ENCODE measurements at regions of chr4 and their contacts with region 1.

Region 1: DNA sequence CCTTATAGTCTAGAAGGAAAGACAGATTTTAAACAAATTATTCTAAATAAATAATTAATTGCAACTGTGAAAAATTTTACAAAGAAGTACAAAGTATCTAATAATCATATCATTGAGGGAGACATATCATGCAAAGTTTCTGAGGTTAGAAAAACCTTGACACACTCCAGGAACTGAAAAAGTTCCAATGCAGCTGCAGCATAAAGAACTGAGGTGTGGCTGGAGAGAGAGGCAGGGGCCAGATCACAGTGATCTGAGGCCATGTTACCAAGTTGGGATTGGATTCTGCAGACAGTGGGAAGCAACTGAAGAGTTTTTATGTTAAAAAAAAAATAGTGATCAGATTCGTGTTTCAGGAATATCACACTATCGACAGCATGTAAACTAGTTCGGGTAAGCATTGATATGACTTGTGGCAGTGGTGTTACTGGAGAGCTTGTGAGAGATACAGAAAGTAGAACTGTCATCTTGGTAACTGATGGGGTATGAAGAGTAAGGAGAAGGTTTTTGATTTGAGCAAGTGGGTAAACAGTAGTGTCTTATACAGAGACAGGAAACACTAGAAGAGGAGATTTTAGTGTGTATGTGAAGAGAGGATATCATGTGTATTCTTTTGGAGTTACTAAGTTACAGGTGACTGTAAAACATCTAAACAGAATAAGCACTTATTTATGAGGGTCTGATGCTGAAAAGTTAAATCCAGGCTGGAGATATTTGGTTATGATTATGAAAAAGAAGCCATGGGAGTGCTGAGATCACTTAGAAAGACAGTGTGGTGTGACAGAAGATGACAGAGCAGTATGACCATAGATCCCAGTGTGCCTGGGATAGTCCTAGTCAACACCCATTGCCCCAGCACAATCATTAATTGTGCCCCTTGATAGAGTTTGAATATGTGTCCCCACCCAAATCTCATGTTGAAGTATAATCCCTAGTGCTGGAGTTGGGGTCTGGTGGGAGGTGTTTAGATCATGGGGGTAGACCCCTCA is 15.6 kb upstream of the SPRY1 start:
- DNase-seq: no peak
- ATAC-seq: no peak
- H3K4me3 ChIP-seq: no peak overlapping the region
- H3K27ac ChIP-seq: no peak overlapping the region
- H3K4me1 ChIP-seq: peaks cover 0 to 2% of the 10 kb centered on the region in 2 donors
- H3K27me3 ChIP-seq: no peaks in the 10 kb centered on the region
- CTCF ChIP-seq: no peak
- POLR2A ChIP-seq: no peak

Region 2: DNA sequence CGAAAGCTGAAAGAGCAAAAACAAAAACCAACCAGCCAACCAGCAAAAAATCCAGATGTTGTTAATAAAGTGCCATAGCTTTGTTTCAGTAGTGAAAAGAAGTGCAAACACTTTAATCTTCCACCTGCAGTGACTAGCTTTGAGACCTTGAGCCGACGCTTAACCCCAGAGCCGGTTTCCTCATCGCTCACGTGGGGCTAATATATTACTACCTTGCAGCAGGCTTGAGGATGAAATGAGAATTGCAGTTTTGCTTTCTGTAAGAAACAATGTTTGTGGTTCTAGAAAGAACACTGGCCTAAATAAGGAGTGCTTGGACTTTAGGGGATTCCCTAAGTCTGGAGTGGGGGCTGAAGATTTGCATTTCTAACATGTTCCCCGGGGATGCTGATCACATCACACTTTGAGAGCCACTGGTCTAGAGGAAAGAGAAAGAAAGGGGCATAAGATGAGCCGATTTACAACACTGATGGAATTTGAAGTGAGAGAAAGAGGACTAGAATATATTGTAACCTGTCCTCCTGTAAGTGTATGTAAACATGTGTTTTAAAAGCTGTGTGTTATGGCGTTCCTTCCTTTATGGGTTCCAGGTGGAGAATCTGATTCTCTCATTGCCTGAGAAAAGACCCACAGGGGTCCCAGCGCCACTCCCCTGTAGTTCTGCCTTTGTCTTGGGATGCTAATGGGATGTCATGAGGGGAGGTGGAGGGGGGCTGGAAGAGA is 553.0 kb before region 1 on chr4:
- in situ Hi-C with region 1: no loop called
- intact Hi-C with region 1: no loop called
- DNase-seq: no peak
- ATAC-seq: peak in 1 of 2 donors; percentile 50
- H3K4me3 ChIP-seq: peak overlapping the region; percentile 68 to 78 (median 71)
- H3K27ac ChIP-seq: peak overlapping the region; percentile 61 to 76 (median 72)
- H3K4me1 ChIP-seq: peaks cover 5 to 8% of the 10 kb centered on the region in 2 donors
- H3K27me3 ChIP-seq: peaks cover 22 to 35% (median 31%) of the 10 kb centered on the region in 3 donors
- CTCF ChIP-seq: no peak
- POLR2A ChIP-seq: no peak

Region 3: DNA sequence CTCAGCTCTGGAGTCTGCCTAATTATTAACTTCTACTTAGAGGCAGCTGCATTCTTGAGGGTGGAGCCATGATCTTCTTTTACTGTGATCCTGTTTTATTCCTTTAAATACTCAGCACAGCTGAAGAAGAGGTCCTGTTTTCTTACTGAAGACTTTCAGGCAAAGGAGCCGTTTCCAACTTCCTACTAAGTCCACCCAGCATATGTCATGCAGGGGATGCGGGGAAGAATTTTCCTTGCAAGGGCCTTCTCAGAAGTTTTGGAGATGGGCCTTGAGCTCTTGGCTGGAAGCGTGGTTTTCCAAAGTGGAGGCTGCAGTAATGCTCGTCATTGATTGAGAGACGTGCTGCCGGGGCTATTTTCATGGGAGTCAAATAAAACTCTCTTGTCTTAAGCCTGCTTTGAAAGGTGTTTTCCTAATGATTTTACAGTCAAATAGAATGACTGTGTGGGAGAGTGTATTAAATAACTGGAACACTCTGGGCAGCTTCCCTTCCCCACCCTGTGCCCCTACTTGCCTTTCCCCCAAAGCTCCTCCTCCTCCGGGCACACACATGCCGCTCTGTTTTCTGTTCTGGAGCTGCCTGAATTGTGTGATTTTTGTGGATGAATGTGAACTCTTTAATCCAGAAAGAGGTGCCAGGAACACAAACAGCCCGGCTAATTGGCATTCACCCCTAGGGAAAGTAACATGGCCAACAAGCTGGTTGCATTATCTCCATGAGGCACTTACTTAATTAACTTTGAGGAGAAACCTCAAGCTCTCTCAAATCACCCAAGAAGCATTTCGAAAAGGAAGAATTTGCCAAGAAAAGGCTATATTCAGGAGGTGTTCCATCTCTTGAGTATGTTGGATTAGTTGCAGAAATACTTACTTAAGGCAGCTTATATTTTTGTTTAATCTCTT is 526.3 kb before region 1 on chr4:
- in situ Hi-C with region 1: no loop called
- intact Hi-C with region 1: no loop called
- DNase-seq: no peak
- ATAC-seq: no peak
- H3K4me3 ChIP-seq: peak overlapping the region; percentile 8 to 21 (median 14)
- H3K27ac ChIP-seq: no peak overlapping the region
- H3K4me1 ChIP-seq: peaks cover 0 to 9% of the 10 kb centered on the region in 2 donors
- H3K27me3 ChIP-seq: no peaks in the 10 kb centered on the region
- CTCF ChIP-seq: no peak
- POLR2A ChIP-seq: no peak

Region 4: DNA sequence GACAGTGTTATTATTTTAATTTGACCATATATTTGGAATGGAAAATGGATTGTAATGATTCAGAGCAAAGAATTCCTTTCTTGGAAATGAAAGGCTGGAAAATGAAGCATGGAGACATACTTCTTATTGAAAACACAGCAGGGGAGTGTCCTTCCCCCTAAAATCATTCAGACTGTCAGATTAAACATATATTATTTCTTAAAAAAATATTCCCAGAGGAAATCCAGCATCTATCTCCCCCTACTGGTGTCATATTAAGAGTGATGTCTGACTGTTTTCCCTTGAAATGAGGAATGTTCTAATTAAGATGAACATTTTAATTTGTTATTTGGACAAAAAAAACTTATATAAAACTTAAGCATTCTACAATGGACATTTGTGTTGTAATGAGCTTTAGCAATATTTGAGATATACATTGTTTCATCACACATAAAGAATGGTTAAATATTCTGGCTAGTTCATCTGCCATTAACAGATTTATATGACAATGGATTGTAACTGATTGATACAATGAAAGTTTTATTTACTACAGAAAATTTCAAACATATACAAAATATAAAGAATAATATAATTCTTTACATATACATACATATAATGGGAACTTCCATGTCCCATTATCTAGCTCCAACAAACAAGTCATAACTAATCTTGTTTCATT is 280.2 kb after region 1 on chr4:
- in situ Hi-C with region 1: loop called in 1 of 4 experiments (anchors 10 kb)
- intact Hi-C with region 1: no loop called
- DNase-seq: no peak
- ATAC-seq: no peak
- H3K4me3 ChIP-seq: no peak overlapping the region
- H3K27ac ChIP-seq: no peak overlapping the region
- H3K4me1 ChIP-seq: peaks cover 8 to 13% of the 10 kb centered on the region in 2 donors
- H3K27me3 ChIP-seq: no peaks in the 10 kb centered on the region
- CTCF ChIP-seq: peak; percentile 28 to 61 (median 46)
- POLR2A ChIP-seq: no peak

Measured in gastrocnemius medialis (tissue), 4 donors.